ENCODE measurements at regions of chr2 and their contacts with region 1.

Region 1: DNA sequence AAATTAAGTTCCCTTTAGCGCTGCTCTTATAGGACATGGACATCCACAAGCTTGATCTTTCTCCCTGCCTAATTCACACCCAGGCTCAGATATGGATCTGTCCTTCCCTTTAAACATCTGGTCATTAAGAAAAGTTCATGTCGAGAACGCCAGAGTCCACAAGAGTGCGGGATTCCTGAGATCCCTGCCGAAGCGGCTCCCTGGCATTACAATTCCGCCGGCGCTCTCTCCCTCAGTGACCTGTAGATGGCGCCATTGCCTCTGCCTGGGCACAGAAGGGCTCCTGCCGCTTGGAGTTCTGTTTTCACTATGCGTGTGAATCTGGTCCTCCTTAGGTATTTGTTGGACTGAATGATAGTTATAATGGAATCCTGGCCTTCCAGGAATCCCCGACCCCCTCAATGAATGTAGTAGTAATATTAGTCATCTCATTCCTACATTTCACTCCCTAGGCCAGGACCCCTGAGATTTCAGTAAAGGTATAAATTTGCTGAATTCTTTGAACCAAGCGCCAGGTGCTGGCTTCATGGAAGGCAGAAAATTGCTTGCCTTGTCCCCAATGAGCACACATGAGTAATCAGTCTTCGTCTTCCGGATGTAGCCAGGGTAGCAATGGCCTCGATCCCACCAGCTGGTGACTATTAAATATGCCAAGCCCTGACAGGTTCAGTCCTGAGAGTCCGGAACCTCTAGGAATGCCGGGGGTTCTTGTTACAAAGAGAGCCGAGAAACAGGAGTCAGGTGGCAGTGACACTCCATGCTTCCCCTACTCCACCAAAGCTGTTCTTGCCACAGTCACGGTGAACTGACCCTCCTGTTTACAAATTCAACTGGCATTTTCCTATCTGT is 26.4 kb upstream of the CD207 start:
- DNase-seq: peak; percentile 79
- H3K4me3 ChIP-seq: no peak overlapping the region
- H3K27ac ChIP-seq: no peak overlapping the region
- H3K4me1 ChIP-seq: peaks cover 0 to 4% (median 0%) of the 10 kb centered on the region in 4 donors
- H3K27me3 ChIP-seq: peaks cover 74% of the 10 kb centered on the region
- CTCF ChIP-seq: peak; percentile 73 to 98 (median 88)
- EP300 ChIP-seq: no peak
- POLR2A ChIP-seq: no peak

Region 2: GRCh38 chr2:70919672-70920366 is 57.8 kb after region 1 on chr2:
- in situ Hi-C with region 1: loop called in 1 of 4 experiments (anchors 10 kb)
- intact Hi-C with region 1: loop called (anchors 2 kb)
- DNase-seq: peak; percentile 83
- H3K4me3 ChIP-seq: no peak overlapping the region
- H3K27ac ChIP-seq: no peak overlapping the region
- H3K4me1 ChIP-seq: no peaks in the 10 kb centered on the region
- H3K27me3 ChIP-seq: peaks cover 23% of the 10 kb centered on the region
- CTCF ChIP-seq: peak; percentile 69 to 87 (median 83)
- EP300 ChIP-seq: no peak
- POLR2A ChIP-seq: no peak

Region 3: GRCh38 chr2:70948337-70949003 is 86.5 kb after region 1 on chr2:
- in situ Hi-C with region 1: loop called in 1 of 4 experiments (anchors 10 kb)
- intact Hi-C with region 1: no loop called
- DNase-seq: peak; percentile 80
- H3K4me3 ChIP-seq: peak overlapping the region in 2 of 4 donors; percentile 16 to 41
- H3K27ac ChIP-seq: no peak overlapping the region
- H3K4me1 ChIP-seq: peaks cover 0 to 7% (median 2%) of the 10 kb centered on the region in 4 donors
- H3K27me3 ChIP-seq: peaks cover 42% of the 10 kb centered on the region
- CTCF ChIP-seq: peak; percentile 70 to 86 (median 80)
- EP300 ChIP-seq: no peak
- POLR2A ChIP-seq: no peak

Region 4: DNA sequence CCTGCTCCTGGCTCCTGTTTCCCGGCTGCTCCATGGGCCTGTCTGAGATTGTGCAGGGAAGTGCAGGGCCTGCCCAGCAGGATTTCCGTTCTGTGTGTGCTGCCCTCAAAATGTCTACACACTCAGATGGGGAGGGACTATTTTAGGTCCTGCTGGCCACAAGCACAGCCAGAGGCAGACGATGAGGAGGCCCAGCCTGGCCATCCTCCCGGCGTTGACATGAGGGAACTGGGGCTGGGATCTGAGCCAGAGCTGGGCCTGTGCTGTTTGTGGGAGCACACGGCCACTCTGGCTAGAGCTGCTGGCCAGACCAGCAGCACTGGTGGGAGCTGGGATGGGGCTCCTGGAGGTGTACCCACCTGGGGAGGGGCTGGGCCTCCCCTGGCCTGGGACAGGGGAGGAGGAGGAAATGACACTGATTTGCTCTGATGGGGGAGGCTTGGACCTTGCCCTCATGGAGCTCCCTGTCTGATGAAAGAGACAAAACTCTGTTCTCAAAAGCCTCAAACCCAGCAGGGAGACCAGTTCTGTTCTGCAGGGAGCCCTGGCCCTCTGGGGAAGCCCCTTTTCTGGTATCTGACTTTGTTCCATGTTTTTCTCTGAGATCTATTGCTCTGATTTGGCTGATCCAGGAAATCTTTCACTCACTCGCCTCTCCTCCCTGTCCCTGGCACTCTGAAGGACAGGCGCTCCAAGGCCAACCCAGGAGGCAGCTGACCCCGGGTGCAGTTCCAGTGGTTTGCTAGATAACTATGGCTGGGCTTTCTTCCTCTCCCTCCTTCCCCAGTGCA is 753.2 kb after region 1 on chr2:
- in situ Hi-C with region 1: no loop called
- intact Hi-C with region 1: no loop called
- DNase-seq: peak; percentile 37
- H3K4me3 ChIP-seq: no peak overlapping the region
- H3K27ac ChIP-seq: peak overlapping the region; percentile 47 to 56 (median 51)
- H3K4me1 ChIP-seq: peaks cover 0 to 13% (median 9%) of the 10 kb centered on the region in 4 donors
- H3K27me3 ChIP-seq: no peaks in the 10 kb centered on the region
- CTCF ChIP-seq: no peak
- EP300 ChIP-seq: no peak
- POLR2A ChIP-seq: no peak

Measured in transverse colon (tissue), 4 donors.